Activated naive CD8-positive, alpha-beta T cell treated with anti-CD3 and anti-CD28 coated beads, Interleukin-2, amount 10 ng/mL, durations not matched to agents 7 days and 5 days (primary cell): ENCODE measurements at regions of chr1 and their contacts with region 1.

Region 1: DNA sequence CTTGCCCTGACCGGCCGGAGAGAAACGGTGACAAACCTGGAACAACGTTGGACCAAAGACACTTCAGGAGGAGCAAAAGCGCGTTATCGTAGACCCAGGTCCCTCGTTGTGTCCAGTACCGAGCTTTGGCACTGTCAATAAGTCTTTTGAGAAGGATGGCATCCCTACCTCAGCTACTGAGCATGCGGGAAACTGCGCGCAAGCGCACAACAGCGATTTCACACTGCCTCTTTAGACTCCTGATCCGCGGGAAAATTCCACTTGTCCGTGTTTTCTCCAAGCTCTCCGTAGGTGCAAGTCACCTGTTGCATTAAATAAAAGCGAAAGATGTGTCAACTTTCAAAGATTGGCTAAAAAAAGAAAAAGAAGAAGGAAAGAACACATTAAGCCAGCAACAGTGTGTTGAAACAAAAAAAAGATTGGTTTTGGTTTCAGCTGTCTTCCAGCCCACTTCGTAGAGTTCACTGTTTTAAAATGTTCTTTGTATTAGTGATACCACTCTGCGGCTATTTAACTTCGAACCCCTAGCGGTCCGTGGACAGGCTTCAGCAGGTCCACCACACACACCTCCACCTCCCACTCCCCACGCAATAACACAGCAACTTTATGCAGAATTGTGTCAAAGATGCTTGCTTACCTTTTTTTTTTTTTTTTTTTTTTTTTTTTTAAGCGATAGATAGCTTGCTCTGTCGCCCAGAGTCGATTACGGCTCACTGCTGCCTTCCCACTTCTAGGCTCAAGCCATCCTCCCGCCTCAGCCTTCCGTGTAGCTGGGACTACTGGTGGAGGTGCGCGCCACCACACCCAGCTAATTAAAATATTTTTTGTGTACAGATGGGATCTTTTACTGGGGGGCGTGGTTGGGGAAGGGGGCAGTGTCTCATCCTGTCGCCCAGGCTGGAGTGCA is at the start of gene BPNT1:
- DNase-seq: peak; percentile 90
- ATAC-seq: peak; percentile 82
- H3K4me3 Mint-ChIP-seq: peak within 1 kb of the TSS; percentile 96
- H3K27ac Mint-ChIP-seq: peak within 1 kb of the TSS; percentile 86
- H3K4me1 Mint-ChIP-seq: peaks cover 7% of the 10 kb centered on the region
- H3K27me3 Mint-ChIP-seq: no peaks in the 10 kb centered on the region
- total RNA-seq, gene BPNT1: 18.4 to 23.3 TPM

Region 2: GRCh38 chr1:220046052-220046930 is 43.6 kb before region 1 on chr1 and contains the start of gene EPRS1:
- POLR2A ChIA-PET with region 1: interaction called, 10 read pairs
- DNase-seq: peak; percentile 93
- ATAC-seq: peak; percentile 98
- H3K4me3 Mint-ChIP-seq: peak within 1 kb of the TSS; percentile 97
- H3K27ac Mint-ChIP-seq: peak within 1 kb of the TSS; percentile 97
- H3K4me1 Mint-ChIP-seq: peaks cover 15% of the 10 kb centered on the region
- H3K27me3 Mint-ChIP-seq: no peaks in the 10 kb centered on the region
- total RNA-seq, gene EPRS1: 111 to 117 TPM